Kidney (tissue), 22 donors: ENCODE measurements at regions of chr12 and their contacts with region 1.

Region 1: GRCh38 chr12:32659908-32660440 is 19.1 kb upstream of the DNM1L start:
- DNase-seq: no peak
- H3K4me3 ChIP-seq: no peak overlapping the region
- H3K27ac ChIP-seq: peak overlapping the region in 1 of 2 donors; percentile 47
- H3K4me1 ChIP-seq: peaks cover 0 to 2% (median 0%) of the 10 kb centered on the region in 3 donors
- H3K27me3 ChIP-seq: no peaks in the 10 kb centered on the region
- CTCF ChIP-seq: no peak

Region 2: GRCh38 chr12:32365473-32366064 is 294.4 kb before region 1 on chr12:
- intact Hi-C with region 1: loop called (anchors 10 kb)
- DNase-seq: peak in 4 of 5 donors; percentile 57 to 86 (median 74)
- H3K4me3 ChIP-seq: no peak overlapping the region
- H3K27ac ChIP-seq: no peak overlapping the region
- H3K4me1 ChIP-seq: peaks cover 0 to 9% (median 3%) of the 10 kb centered on the region in 3 donors
- H3K27me3 ChIP-seq: no peaks in the 10 kb centered on the region
- CTCF ChIP-seq: peak; percentile 83

Region 3: GRCh38 chr12:32455607-32456071 is 204.3 kb before region 1 on chr12:
- intact Hi-C with region 1: loop called (anchors 10 kb)
- DNase-seq: peak in 2 of 5 donors; percentile 75 to 78
- H3K4me3 ChIP-seq: peak overlapping the region; percentile 9 to 60 (median 45)
- H3K27ac ChIP-seq: peak overlapping the region in 1 of 2 donors; percentile 41
- H3K4me1 ChIP-seq: peaks cover 0 to 24% (median 9%) of the 10 kb centered on the region in 3 donors
- H3K27me3 ChIP-seq: no peaks in the 10 kb centered on the region
- CTCF ChIP-seq: peak; percentile 65

Region 4: DNA sequence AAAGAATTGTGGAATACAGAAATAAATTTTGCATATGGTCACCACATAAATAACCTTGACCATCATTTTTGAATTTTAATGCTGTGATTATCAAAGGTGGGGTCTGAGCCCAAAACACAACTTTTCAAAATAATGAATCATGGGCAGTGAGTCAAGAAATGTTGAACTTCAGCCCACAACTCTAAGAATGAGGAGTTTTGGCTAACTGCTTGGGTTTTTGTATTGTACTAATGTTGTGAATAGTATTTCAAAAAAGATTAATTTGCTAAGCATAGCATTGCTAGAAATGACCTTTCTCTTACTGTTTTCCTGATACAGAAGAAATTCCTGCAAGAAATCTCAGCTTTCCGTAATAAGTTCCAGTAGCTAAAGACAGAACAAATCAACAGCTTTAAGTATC is 120.1 kb after region 1 on chr12:
- intact Hi-C with region 1: no loop called
- DNase-seq: peak in 2 of 5 donors; percentile 36 to 77
- H3K4me3 ChIP-seq: no peak overlapping the region
- H3K27ac ChIP-seq: no peak overlapping the region
- H3K4me1 ChIP-seq: no peaks in the 10 kb centered on the region
- H3K27me3 ChIP-seq: no peaks in the 10 kb centered on the region
- CTCF ChIP-seq: no peak